Left colon (tissue), 2 donors: ENCODE measurements at regions of chr5 and their contacts with region 1.

Region 1: DNA sequence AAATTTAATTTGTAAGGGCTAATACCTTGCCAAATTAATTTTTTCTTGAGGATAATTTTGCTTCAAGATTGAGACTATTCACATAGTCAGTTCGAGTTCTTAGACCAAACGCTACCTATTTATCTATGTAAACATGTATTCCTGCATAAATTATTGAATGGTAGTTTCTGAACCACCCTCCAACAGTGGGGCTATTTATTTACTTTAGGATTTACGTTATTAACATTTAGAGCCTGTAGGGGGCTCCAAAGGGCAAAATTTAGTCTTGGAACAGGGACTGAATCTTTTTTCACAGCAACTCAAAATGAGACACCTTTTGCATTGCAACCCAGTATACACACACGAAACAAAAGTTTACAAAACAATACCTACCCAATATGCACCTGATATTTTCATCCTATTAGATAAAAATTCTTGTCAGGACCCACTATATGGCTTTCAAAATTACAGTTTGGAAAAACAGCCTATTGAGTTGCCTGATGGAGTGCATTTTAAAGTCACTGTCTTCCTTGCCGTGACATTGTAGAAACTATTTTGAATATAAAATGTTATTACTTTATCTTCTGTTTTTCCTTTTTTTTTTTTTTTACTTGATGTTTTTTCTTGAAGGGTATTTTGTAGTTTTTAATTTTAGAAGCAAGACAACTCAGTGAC is 47.1 kb upstream of the POU4F3 start:
- DNase-seq: no peak
- ATAC-seq: peak; percentile 44

Region 2: DNA sequence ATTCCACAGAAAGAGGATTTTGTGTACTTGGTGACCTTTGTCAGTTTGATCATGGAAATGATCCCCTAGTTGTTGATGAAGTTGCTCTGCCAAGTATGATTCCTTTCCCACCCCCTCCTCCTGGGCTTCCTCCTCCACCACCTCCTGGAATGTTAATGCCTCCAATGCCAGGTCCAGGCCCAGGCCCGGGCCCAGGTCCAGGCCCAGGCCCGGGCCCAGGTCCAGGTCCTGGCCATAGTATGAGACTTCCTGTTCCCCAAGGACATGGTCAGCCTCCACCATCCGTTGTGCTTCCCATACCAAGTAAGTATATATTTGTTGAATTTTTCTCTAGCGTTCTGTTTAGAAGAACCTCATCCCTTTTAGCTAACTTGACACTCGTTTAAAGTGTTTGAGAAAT is 58.1 kb before region 1 on chr5:
- intact Hi-C with region 1: no loop called
- DNase-seq: no peak
- ATAC-seq: no peak

Region 3: GRCh38 chr5:146426853-146427618 is 135.5 kb after region 1 on chr5:
- intact Hi-C with region 1: loop called in 1 of 2 experiments (anchors 5 kb)
- DNase-seq: no peak
- ATAC-seq: peak; percentile 38